Panc1 (cell line): ENCODE measurements at regions of chr2 and their contacts with region 1.

Region 1: GRCh38 chr2:121052521-121052920 is 232.5 kb downstream of the TFCP2L1 start:
- DNase-seq: no peak
- ATAC-seq: peak; percentile 56; the same call in 1 of the 2 replicates
- H3K4me3 ChIP-seq: no peak overlapping the region
- H3K27ac ChIP-seq: no peak overlapping the region
- H3K4me1 ChIP-seq: no peaks in the 10 kb centered on the region
- H3K27me3 ChIP-seq: no peaks in the 10 kb centered on the region
- CTCF ChIP-seq: no peak

Region 2: GRCh38 chr2:121340926-121341325 is 288.4 kb after region 1 on chr2:
- CTCF ChIA-PET with region 1: no interaction called
- POLR2A ChIA-PET with region 1: interaction called, 18 read pairs
- in situ Hi-C with region 1: no loop called
- intact Hi-C with region 1: no loop called
- DNase-seq: no peak
- ATAC-seq: no peak
- H3K4me3 ChIP-seq: no peak overlapping the region
- H3K27ac ChIP-seq: no peak overlapping the region
- H3K4me1 ChIP-seq: no peaks in the 10 kb centered on the region
- H3K27me3 ChIP-seq: no peaks in the 10 kb centered on the region
- CTCF ChIP-seq: no peak